ENCODE measurements at regions of chr22 and their contacts with region 1.

Region 1: DNA sequence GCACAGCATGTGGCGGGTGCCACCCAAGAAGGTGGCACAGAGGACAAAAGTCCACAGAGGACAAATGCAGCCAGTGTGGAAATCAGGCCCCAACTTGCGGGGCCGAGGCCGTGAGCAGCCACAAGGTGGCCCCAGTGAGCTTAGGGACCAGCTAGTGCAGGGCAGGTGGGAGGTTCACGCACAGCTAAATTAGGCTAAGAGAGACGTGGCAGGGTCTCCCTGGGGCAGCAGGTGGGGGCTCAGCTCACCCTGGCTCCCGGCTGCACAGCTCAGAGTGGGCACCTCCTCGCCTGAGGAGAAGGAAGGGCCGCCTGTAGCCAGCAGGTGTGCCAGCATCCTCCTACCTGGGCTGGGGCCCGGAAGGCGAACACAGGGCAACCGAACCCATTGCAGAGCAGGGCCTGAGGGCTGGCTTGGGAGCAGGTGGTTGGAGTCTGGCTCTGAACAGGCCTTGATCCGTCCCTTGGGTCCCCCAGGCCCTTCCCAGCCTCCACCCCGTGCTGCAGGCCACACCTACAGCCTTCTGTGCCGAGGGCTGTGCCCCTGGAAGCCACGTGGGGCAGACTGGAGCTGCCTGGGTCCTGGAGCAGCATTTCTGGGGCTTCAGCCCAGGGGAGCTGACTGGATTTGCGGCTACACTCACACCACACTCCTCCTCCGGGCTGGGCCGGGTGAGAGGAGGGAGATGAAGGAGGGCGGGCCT is 26.1 kb upstream of the CELSR1 start:
- DNase-seq: peak; percentile 87
- H3K4me3 Mint-ChIP-seq: peak overlapping the region; percentile 28
- H3K27ac Mint-ChIP-seq: no peak overlapping the region
- H3K4me1 Mint-ChIP-seq: peaks cover 9% of the 10 kb centered on the region
- H3K27me3 Mint-ChIP-seq: no peaks in the 10 kb centered on the region

Region 2: GRCh38 chr22:46346680-46347405 is 216.7 kb before region 1 on chr22:
- CTCF ChIA-PET with region 1: no interaction called
- POLR2A ChIA-PET with region 1: no interaction called
- intact Hi-C with region 1: no loop called
- DNase-seq: no peak
- H3K4me3 Mint-ChIP-seq: no peak overlapping the region
- H3K27ac Mint-ChIP-seq: no peak overlapping the region
- H3K4me1 Mint-ChIP-seq: no peaks in the 10 kb centered on the region
- H3K27me3 Mint-ChIP-seq: no peaks in the 10 kb centered on the region

Region 3: DNA sequence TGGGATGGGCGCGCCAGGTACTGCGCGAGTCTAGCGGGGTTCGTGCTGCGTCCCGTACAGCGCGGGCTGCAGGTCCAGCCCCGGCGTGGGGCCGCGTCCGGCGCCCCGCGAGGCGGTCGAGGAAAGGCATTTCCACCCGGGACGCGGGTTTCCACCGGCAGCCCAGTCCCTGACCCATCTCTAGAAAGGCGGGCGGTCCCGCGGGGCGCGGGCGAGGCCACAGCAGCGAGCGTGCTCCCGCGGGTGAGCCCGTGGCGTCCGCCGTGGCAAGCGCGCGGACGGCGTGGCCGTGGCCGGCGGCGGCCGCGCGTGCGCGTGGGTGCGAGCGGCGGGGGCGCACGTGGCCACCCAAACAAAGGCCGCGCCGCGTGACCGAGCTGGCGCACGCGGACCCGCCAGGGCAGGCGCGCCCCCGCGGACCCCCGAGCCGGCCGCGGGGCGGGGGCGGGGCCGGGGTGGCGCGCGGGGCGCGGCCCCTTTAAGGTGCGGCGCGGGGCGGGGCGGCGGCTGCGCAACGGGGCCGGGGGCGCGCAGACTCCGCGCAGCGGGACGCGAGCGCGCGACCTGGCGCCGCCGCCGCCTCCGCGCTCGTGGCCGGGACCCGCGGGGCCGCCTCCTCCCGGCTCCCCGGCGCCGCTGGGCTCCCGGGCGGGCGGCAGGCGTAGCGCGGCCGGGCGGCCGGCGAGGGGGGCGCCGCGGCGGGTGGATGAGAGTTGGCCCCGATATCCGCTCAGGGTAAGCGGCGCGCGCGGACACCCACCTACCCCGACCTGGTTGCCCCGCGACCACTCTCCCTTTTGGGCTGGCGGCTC is 13.2 kb after region 1 on chr22:
- CTCF ChIA-PET with region 1: interaction called, 13 read pairs
- POLR2A ChIA-PET with region 1: no interaction called
- intact Hi-C with region 1: no loop called
- DNase-seq: peak; percentile 53
- H3K4me3 Mint-ChIP-seq: peak overlapping the region; percentile 72
- H3K27ac Mint-ChIP-seq: no peak overlapping the region
- H3K4me1 Mint-ChIP-seq: peaks cover 18% of the 10 kb centered on the region
- H3K27me3 Mint-ChIP-seq: no peaks in the 10 kb centered on the region

Region 4: DNA sequence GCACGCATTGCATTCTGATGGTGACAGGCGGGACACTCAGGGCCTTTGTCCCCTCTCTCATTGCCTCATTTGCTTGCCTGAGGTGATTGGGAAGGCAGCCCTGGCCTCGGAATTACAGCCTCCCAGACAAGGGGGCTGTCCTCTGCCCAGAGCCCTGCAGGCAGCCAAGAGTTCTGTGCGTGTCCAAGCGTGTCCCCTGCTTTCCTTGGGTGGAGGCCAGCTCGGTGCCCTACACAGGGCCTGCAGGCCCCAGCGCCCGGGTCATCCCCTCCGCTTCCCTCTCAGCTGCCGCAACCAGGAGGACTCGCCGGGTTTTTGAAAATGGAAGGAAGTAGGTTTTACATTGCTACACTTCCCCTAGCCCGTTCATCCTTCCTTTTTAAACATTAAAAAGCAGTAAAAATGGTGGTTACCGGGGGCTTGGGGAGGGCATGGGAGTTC is 58.6 kb after region 1 on chr22:
- CTCF ChIA-PET with region 1: interaction called, 12 read pairs
- POLR2A ChIA-PET with region 1: interaction called, 4 read pairs
- intact Hi-C with region 1: no loop called
- DNase-seq: no peak
- H3K4me3 Mint-ChIP-seq: no peak overlapping the region
- H3K27ac Mint-ChIP-seq: no peak overlapping the region
- H3K4me1 Mint-ChIP-seq: no peaks in the 10 kb centered on the region
- H3K27me3 Mint-ChIP-seq: no peaks in the 10 kb centered on the region

Region 5: GRCh38 chr22:46681010-46681409 is 117.5 kb after region 1 on chr22:
- CTCF ChIA-PET with region 1: interaction called, 25 read pairs
- POLR2A ChIA-PET with region 1: no interaction called
- intact Hi-C with region 1: no loop called
- DNase-seq: peak; percentile 42
- H3K4me3 Mint-ChIP-seq: no peak overlapping the region
- H3K27ac Mint-ChIP-seq: no peak overlapping the region
- H3K4me1 Mint-ChIP-seq: peaks cover 33% of the 10 kb centered on the region
- H3K27me3 Mint-ChIP-seq: no peaks in the 10 kb centered on the region

Region 6: GRCh38 chr22:46762238-46763050 is 198.9 kb after region 1 on chr22 and contains the start of gene TBC1D22A:
- CTCF ChIA-PET with region 1: interaction called, 28 read pairs
- POLR2A ChIA-PET with region 1: interaction called, 3 read pairs
- intact Hi-C with region 1: no loop called
- DNase-seq: peak; percentile 97
- H3K4me3 Mint-ChIP-seq: peak within 1 kb of the TSS; percentile 100
- H3K27ac Mint-ChIP-seq: peak within 1 kb of the TSS; percentile 97
- H3K4me1 Mint-ChIP-seq: peaks cover 59% of the 10 kb centered on the region
- H3K27me3 Mint-ChIP-seq: no peaks in the 10 kb centered on the region
- total RNA-seq, gene TBC1D22A: 33.2 to 34.9 TPM